ENCODE measurements at regions of chr7 and their contacts with region 1.

Region 1: DNA sequence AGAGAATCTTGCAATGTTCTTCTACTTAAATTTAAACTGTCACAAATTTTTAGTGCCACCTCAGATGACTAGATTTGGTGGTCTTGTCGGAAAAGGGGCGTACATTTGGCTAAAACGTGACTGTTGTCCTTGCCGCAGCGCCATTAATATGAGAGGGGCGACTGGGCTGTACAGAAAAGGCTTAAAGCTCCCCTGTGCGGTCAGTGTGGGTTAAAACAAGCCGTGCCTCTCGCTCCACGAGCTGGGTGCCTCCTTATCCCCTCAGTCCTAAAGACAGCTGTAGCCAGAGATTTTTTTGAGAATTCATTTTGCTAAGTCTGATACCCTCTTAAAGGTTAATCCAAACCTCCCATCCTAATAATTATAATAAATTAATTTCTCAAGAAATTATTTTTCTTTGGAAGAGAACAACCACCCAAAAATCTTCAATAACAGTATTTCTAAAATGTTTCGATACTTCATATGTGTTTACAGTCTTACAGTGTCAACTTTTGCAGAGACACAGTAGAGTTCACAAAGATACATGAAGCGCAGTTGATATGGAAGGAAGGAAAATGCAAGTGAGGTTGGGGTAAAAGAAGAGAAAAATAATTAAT is 68.6 kb downstream of the C7orf25 start:
- DNase-seq: peak; percentile 51
- ATAC-seq: peak; percentile 39
- H3K4me3 Mint-ChIP-seq: no peak overlapping the region
- H3K27ac Mint-ChIP-seq: no peak overlapping the region
- H3K4me1 Mint-ChIP-seq: no peaks in the 10 kb centered on the region
- H3K27me3 Mint-ChIP-seq: peaks cover 29% of the 10 kb centered on the region

Region 2: GRCh38 chr7:41977151-41977651 is 866.1 kb before region 1 on chr7:
- CTCF ChIA-PET with region 1: no interaction called
- POLR2A ChIA-PET with region 1: no interaction called
- intact Hi-C with region 1: loop called in 1 of 2 experiments (anchors 10 kb)
- DNase-seq: no peak
- ATAC-seq: no peak
- H3K4me3 Mint-ChIP-seq: no peak overlapping the region
- H3K27ac Mint-ChIP-seq: no peak overlapping the region
- H3K4me1 Mint-ChIP-seq: no peaks in the 10 kb centered on the region
- H3K27me3 Mint-ChIP-seq: peaks cover 10% of the 10 kb centered on the region

Region 3: GRCh38 chr7:42014625-42015546 is 828.4 kb before region 1 on chr7:
- CTCF ChIA-PET with region 1: interaction called, 4 read pairs
- POLR2A ChIA-PET with region 1: no interaction called
- intact Hi-C with region 1: loop called in 1 of 2 experiments (anchors 10 kb)
- DNase-seq: peak; percentile 71
- ATAC-seq: no peak
- H3K4me3 Mint-ChIP-seq: no peak overlapping the region
- H3K27ac Mint-ChIP-seq: no peak overlapping the region
- H3K4me1 Mint-ChIP-seq: no peaks in the 10 kb centered on the region
- H3K27me3 Mint-ChIP-seq: peaks cover 28% of the 10 kb centered on the region

Region 4: GRCh38 chr7:42128703-42129102 is 714.6 kb before region 1 on chr7:
- CTCF ChIA-PET with region 1: no interaction called
- POLR2A ChIA-PET with region 1: no interaction called
- intact Hi-C with region 1: loop called in 1 of 2 experiments (anchors 10 kb)
- DNase-seq: peak; percentile 26
- ATAC-seq: no peak
- H3K4me3 Mint-ChIP-seq: no peak overlapping the region
- H3K27ac Mint-ChIP-seq: no peak overlapping the region
- H3K4me1 Mint-ChIP-seq: no peaks in the 10 kb centered on the region
- H3K27me3 Mint-ChIP-seq: peaks cover 6% of the 10 kb centered on the region

Region 5: DNA sequence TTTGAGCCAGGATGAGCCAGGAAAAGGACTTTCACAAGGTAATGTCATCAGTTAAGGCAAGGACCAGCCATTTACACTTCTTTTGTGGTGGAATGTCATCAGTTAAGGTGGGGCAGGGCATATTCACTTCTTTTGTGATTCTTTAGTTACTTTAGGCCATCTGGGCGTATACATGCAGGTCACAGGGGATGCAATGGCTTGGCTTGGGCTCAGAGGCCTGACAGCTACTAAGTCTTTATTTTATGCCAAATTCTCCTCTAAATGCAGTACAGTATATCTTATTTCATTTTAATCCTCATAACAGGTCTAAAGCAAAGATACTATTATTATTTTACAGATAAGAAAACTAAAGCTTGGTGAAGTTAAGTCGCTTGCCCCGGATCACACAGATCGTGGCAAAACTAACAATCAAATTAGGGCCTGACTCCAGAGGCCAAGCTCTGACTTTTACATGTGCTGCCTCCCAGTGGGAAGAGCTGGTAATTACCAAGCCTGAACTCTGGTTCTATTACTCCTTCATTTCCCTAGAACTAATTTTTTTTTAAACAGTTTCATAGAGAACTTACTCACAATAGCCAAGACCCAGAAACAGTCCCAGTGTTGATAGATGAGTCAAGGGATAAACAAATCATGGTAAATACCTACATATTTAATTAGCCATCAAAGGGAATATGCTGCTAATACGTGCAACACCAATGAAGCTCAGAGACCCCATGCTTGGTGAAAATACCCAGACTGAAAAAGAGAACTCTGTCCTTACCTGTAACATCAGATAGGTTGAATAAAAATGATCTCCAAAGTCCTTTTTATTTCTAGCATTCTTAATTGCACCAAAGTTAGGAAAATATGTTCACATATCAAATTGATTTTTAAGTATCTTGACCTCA is 33.1 kb after region 1 on chr7:
- CTCF ChIA-PET with region 1: interaction called, 16 read pairs
- POLR2A ChIA-PET with region 1: no interaction called
- intact Hi-C with region 1: no loop called
- DNase-seq: peak; percentile 80
- ATAC-seq: peak; percentile 73
- H3K4me3 Mint-ChIP-seq: no peak overlapping the region
- H3K27ac Mint-ChIP-seq: no peak overlapping the region
- H3K4me1 Mint-ChIP-seq: no peaks in the 10 kb centered on the region
- H3K27me3 Mint-ChIP-seq: no peaks in the 10 kb centered on the region